ENCODE measurements at regions of chr6 and their contacts with region 1.

Region 1: GRCh38 chr6:158605266-158605878 is 39.2 kb downstream of the DYNLT1 start:
- DNase-seq: peak; percentile 46
- H3K4me3 ChIP-seq: no peak overlapping the region
- H3K27ac ChIP-seq: no peak overlapping the region
- H3K27me3 ChIP-seq: no peaks in the 10 kb centered on the region
- CTCF ChIP-seq: peak; percentile 77

Region 2: DNA sequence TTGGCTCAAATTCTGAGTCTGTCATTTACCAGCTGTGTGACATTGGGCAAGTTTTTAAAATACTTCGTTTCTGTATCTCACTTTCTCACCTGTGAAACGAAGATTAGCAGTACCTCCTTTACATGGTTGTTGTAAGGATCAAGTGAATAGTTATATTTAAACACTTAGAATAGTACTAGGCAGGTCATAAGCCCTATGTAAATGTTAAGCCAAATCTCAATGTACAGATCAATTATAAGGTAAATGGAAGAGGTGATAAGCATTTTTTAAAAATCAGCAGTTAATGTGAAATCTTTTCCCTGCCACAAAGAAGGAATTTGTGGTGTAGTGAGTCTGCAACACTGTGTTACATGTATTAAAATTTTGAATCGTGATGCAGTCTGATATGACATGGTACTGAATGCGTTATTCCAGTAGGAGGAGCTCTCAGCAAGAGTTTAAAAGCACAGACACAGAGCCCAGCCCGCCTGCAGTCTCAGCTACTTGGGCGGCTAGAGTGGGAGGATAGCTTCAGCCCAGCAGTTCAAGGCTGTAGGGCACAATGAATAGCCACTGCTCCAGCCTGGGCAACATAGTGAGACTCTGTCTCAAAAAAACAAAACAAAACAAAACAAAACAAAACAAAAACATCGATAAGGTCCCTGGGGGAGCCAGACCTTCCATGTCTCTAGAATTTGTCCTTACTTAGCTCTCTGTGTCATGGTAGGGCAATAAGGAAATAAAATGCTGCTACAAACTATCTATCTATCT is 391.3 kb before region 1 on chr6:
- CTCF ChIA-PET with region 1: interaction called, 111 read pairs
- POLR2A ChIA-PET with region 1: no interaction called
- DNase-seq: peak; percentile 53
- H3K4me3 ChIP-seq: no peak overlapping the region
- H3K27ac ChIP-seq: no peak overlapping the region
- H3K27me3 ChIP-seq: no peaks in the 10 kb centered on the region
- CTCF ChIP-seq: peak; percentile 85

Region 3: GRCh38 chr6:158518191-158519127 is 86.9 kb before region 1 on chr6:
- CTCF ChIA-PET with region 1: interaction called, 13 read pairs
- POLR2A ChIA-PET with region 1: no interaction called
- DNase-seq: peak; percentile 43
- H3K4me3 ChIP-seq: peak overlapping the region; percentile 54
- H3K27ac ChIP-seq: peak overlapping the region; percentile 58
- H3K27me3 ChIP-seq: no peaks in the 10 kb centered on the region
- CTCF ChIP-seq: peak; percentile 72

Region 4: GRCh38 chr6:158595223-158595622 is 10.1 kb before region 1 on chr6:
- CTCF ChIA-PET with region 1: interaction called, 13 read pairs
- POLR2A ChIA-PET with region 1: no interaction called
- DNase-seq: no peak
- H3K4me3 ChIP-seq: no peak overlapping the region
- H3K27ac ChIP-seq: no peak overlapping the region
- H3K27me3 ChIP-seq: no peaks in the 10 kb centered on the region
- CTCF ChIP-seq: peak; percentile 40

Measured in AG04450 (cell line).